Prostate gland (tissue), 2 donors: ENCODE measurements at regions of chr4 and their contacts with region 1.

Region 1: DNA sequence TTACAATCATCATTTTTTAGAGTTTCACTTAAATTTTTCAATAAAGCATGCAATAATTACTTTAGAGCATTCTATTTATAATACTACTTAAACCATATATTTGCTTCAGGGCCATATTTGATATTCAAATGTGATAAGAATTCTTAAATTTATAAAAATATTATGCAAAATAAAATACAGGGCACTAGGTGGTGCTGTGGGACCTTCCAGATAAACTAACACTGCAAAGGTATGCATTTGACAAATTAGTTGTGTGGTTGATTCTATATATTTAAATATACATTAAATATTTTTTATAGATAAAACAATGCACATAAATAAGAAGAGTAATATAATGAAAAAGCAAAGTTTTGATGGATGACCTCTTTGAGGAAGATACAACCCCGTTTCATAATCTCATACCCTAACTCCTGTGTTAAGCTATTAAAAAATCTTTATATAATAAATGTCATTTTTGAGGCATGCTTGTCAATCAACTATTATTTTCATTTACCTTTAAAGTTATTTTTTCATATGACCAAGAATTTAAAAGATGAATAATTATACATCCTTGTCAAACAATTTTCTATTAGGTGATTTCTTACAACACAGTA is 128.4 kb downstream of the REELD1 start:
- DNase-seq: peak; percentile 9
- H3K4me3 ChIP-seq: no peak overlapping the region
- H3K27ac ChIP-seq: no peak overlapping the region
- H3K4me1 ChIP-seq: no peaks in the 10 kb centered on the region
- H3K27me3 ChIP-seq: no peaks in the 10 kb centered on the region
- CTCF ChIP-seq: peak in 3 of 4 experiments; percentile 40 to 62 (median 55)
- POLR2A ChIP-seq: no peak

Region 2: DNA sequence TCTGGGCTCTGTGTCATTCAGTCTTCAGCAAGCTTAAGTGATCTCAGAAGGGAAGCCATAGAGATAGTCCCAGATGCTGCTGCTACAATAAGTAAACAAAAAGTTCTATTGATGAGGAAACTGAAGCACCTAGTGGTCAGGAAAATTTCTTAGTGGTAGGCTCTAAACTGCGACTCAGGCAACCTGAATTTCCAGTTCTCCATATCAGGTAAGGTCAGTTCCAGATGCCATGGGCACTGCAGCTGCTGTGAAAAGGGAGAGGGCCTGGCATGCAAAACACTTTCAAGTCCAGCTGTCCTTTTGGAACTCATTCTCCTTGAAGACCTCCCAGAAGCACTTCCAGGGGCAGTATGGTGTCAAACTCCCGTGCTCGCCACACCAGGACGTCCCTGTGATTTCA is 82.2 kb before region 1 on chr4:
- intact Hi-C with region 1: no loop called
- DNase-seq: no peak
- H3K4me3 ChIP-seq: no peak overlapping the region
- H3K27ac ChIP-seq: no peak overlapping the region
- H3K4me1 ChIP-seq: no peaks in the 10 kb centered on the region
- H3K27me3 ChIP-seq: no peaks in the 10 kb centered on the region
- CTCF ChIP-seq: no peak
- POLR2A ChIP-seq: no peak

Region 3: DNA sequence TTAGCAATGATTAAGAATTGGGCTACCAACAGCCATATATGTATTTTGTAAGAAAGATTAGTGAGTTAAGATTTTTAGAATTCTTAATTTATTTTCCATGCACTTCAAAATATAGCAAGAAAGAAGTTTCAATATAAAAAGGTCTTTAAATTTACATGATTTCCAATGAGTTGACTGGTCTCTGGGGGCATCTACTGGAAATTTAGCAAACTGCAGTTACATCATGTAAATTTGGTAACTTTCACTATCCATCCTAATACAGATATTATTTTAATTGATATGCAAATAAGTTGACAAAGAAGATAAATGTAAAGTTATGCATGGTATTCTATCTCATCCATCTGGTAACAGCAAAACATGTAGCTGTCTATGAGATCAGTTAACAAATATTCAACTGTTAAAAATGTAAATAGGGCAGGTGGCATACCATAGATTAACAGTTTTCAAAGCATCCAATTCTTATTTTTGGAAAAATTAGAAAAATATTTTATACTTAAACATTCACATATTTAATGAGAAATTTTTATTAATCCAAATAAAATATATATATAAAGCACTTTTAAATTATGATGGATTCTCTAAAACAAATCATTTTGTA is 573.9 kb after region 1 on chr4:
- intact Hi-C with region 1: loop called (anchors 5 kb)
- DNase-seq: no peak
- H3K4me3 ChIP-seq: no peak overlapping the region
- H3K27ac ChIP-seq: no peak overlapping the region
- H3K4me1 ChIP-seq: no peaks in the 10 kb centered on the region
- H3K27me3 ChIP-seq: no peaks in the 10 kb centered on the region
- CTCF ChIP-seq: peak in 3 of 4 experiments; percentile 52 to 77 (median 65)
- POLR2A ChIP-seq: no peak

Region 4: GRCh38 chr4:147096667-147097604 is 754.2 kb after region 1 on chr4:
- intact Hi-C with region 1: loop called (anchors 5 kb)
- DNase-seq: no peak
- H3K4me3 ChIP-seq: no peak overlapping the region
- H3K27ac ChIP-seq: no peak overlapping the region
- H3K4me1 ChIP-seq: no peaks in the 10 kb centered on the region
- H3K27me3 ChIP-seq: no peaks in the 10 kb centered on the region
- CTCF ChIP-seq: peak; percentile 49 to 78 (median 77)
- POLR2A ChIP-seq: no peak